Cardiac septum (tissue), 1 donor: ENCODE measurements at regions of chr19 and their contacts with region 1.

Region 1: DNA sequence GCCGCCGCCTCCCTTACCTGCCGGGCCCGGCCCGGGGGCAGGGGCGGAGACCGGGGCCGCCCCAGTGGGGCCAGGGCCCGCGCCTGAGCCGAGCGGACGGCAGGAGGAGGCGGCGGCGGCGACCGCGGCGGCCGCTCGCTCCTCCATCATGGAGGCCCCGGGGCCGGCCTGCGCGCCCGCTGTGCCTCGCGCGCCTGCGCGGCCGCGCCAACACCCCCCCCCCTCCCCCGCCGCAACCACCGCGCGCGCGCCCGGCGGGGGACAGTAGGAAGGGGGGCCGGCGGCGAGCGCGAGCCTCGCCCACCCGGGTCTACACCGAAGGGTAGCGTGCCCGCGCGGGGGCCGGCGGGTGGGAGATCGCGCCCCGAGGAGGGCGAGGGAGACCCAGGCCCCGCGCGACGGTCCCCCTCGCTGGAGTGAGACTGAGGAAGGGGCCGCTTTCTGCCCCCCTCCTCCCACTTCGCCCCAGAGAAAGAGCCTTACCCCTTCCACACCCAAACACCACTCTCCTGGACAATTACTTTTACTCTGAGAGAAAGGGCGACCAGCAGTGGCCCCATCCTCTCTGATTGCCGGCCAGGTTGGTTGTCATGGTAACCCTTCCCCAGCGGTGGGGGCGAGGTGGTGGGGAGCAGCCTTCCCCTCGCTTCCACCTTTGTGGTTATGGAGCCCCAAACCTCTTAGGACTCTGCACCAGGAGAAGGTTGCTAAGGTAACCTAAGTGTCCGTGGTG is at the start of gene STRN4:
- DNase-seq: no peak
- total RNA-seq, gene STRN4: 54.2 TPM

Region 2: DNA sequence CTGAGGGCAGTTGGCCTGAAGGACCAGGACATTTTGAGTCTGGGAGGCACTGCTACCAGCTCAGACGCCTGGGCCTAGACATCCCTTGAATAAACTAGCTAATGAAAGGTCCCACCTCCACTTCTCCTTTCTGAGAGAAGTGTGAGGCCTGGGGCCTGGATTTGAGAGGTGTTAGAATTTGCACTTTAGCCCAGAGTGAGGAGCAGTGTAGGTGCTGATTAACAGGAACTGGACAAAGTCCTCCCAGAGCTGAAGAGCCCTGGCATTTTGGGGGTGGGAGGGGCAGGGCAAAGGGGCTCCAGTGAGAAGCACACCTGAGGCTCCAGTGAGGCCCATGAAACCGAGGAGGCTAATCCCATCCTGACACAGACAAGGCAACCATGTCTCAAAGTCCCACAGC is 57.1 kb after region 1 on chr19:
- intact Hi-C with region 1: no loop called
- DNase-seq: no peak

Region 3: DNA sequence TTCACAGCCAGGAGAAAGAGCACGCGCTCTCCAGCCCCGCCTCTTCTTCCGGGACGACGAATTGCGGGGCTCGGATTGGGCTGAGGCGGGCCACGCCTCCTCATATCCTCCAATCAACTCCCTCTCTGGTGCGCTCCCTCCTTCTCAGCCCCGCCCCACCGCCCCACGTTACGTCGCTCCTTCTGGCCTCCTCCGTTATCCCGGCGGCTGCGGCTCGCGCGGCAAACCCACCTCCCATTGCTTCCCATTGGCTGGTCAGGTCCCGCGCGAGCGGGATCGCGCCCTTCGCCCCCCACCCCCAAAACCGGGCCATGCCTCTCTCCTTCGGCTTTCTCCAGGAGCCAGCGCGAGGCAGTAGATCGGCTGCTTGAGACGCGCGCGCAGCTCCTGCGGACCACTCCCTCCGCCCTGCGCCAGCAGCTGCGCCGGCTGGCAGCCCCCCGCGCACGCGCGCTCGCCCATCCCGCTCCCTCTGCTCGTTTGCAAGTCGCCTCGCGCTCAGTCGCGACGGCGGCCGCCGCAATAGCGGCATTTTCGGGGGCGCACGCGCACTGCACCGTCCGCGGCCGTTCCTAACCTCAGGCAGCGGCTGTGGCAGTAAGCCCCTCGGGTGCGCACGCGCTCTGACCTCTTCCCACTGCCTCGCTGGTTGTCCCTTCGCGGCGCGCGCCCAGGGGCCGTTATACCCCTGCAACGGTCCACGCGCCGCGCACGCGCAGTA is 113.8 kb after region 1 on chr19:
- intact Hi-C with region 1: no loop called
- DNase-seq: peak; percentile 98

Region 4: DNA sequence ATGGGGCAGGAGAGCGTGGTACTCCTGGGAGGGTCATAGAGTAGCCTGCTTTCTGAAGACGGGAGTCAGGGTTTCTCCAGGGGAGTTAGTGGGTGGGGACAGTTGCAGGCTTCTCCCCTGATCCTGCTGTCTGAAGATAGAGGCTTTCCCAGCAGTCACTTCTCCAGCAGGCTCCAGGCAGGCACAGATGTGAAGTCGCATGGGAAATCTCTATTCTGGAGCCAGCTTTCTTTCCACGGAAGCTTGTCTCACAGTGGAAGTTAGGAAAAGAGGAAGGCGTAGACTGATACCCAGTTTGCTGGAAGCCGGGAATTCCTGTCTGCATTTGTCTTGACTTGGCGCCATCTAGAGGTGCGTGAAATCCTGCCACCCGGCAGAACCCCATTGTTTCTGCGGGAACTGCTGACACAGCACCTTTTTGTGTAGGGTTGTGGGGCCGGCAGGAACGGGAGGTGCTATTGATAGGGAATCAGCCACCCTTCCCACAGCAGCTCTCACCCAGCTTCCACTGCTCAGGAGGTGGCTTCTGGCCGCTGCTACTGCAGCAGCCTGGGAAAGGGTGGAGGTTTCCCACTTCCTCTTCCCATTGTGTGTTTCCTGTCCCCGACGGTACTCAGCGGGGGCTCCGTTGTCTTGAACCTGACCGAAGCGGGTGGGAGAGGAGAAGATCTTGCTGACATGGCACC is 244.7 kb after region 1 on chr19:
- intact Hi-C with region 1: loop called (anchors 5 kb)
- DNase-seq: peak; percentile 90